HCT116 (cell line): ENCODE measurements at regions of chr10 and their contacts with region 1.

Region 1: GRCh38 chr10:6202684-6203330 is at the start of gene PFKFB3:
- DNase-seq: peak; percentile 71
- ATAC-seq: peak; percentile 89
- H3K4me3 ChIP-seq: peak within 1 kb of the TSS; percentile 58 to 74
- H3K27ac ChIP-seq: peak within 1 kb of the TSS; percentile 94
- H3K4me1 ChIP-seq: peaks cover 0 to 27% of the 10 kb centered on the region in 2 experiments; a peak in 3 of 4 replicates
- H3K27me3 ChIP-seq: no peaks in the 10 kb centered on the region
- CTCF ChIP-seq: peak; percentile 76 to 91 (median 83)
- POLR2A ChIP-seq: peak; percentile 88
- RAD21 ChIP-seq: peak; percentile 95
- total RNA-seq, gene PFKFB3: 50.8 TPM

Region 2: DNA sequence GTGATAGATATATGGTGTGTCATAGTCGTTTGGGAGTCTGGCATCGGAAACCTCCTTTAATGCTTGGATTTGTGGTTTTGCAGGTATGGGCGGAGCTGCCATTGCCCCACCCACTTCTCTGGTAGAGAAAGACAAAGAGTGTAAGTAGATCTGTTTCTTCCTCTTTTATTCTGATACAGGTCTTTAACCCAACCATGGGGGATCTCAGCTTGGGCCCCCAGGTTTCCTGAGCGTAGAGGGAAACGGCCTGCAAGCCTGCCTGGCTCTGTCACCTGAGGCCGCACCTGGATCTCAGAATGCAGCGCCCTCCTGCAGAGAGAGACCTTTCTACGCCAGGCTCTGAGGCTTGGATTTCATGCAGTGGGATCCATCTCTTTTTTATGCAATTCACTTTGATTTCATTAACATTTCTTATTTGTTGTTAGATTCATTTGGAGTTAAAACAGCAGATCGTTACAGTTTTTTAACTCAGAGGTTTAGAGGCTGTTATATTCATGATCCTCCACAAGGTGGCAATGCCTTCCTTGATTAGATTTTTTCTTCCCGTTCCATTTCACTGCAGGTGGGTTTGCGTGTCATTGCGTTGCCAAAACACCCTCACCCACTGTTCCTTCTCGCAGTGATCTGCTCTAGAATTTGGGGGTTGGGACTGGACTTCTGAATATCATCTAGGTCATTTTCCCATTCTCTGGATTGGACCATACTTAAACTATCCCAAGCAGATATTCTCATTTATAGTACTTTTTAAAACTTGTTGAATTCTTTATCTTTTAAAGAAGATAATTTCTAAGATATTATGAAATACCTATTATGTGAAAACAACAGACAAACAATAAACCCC is 94.0 kb before region 1 on chr10:
- CTCF ChIA-PET with region 1: no interaction called
- POLR2A ChIA-PET with region 1: no interaction called
- RAD21 ChIA-PET with region 1: no interaction called
- intact Hi-C with region 1: loop called (anchors 5 kb)
- DNase-seq: peak; percentile 13
- ATAC-seq: peak; percentile 72
- H3K4me3 ChIP-seq: no peak overlapping the region
- H3K27ac ChIP-seq: no peak overlapping the region
- H3K4me1 ChIP-seq: peaks cover 7 to 9% of the 10 kb centered on the region in 2 experiments; a peak in 3 of 4 replicates
- H3K27me3 ChIP-seq: no peaks in the 10 kb centered on the region
- CTCF ChIP-seq: peak; percentile 53 to 70 (median 67)
- POLR2A ChIP-seq: no peak
- RAD21 ChIP-seq: peak; percentile 69

Region 3: GRCh38 chr10:6163364-6164270 is 39.2 kb before region 1 on chr10:
- CTCF ChIA-PET with region 1: interaction called, 10 read pairs
- POLR2A ChIA-PET with region 1: interaction called, 4 read pairs
- RAD21 ChIA-PET with region 1: interaction called in 1 of 2 experiments, 3 read pairs
- intact Hi-C with region 1: no loop called
- DNase-seq: peak; percentile 69
- ATAC-seq: peak; percentile 95
- H3K4me3 ChIP-seq: peak overlapping the region; percentile 65 to 94
- H3K27ac ChIP-seq: peak overlapping the region; percentile 96
- H3K4me1 ChIP-seq: peaks cover 15 to 30% of the 10 kb centered on the region in 2 experiments; a peak in 3 of 4 replicates
- H3K27me3 ChIP-seq: no peaks in the 10 kb centered on the region
- CTCF ChIP-seq: no peak
- POLR2A ChIP-seq: no peak
- RAD21 ChIP-seq: no peak

Region 4: GRCh38 chr10:6239213-6239991 is 36.6 kb after region 1 on chr10:
- CTCF ChIA-PET with region 1: interaction called, 3 read pairs
- POLR2A ChIA-PET with region 1: interaction called, 3 read pairs
- RAD21 ChIA-PET with region 1: no interaction called
- intact Hi-C with region 1: loop called (anchors 2 kb)
- DNase-seq: peak; percentile 91
- ATAC-seq: peak; percentile 99
- H3K4me3 ChIP-seq: peak overlapping the region in 1 of 2 experiments; percentile 42; a peak in 2 of 4 replicates
- H3K27ac ChIP-seq: peak overlapping the region; percentile 60
- H3K4me1 ChIP-seq: peaks cover 7 to 16% of the 10 kb centered on the region in 2 experiments
- H3K27me3 ChIP-seq: no peaks in the 10 kb centered on the region
- CTCF ChIP-seq: no peak
- POLR2A ChIP-seq: no peak
- RAD21 ChIP-seq: peak; percentile 36; the same call in 1 of the 2 replicates

Region 5: DNA sequence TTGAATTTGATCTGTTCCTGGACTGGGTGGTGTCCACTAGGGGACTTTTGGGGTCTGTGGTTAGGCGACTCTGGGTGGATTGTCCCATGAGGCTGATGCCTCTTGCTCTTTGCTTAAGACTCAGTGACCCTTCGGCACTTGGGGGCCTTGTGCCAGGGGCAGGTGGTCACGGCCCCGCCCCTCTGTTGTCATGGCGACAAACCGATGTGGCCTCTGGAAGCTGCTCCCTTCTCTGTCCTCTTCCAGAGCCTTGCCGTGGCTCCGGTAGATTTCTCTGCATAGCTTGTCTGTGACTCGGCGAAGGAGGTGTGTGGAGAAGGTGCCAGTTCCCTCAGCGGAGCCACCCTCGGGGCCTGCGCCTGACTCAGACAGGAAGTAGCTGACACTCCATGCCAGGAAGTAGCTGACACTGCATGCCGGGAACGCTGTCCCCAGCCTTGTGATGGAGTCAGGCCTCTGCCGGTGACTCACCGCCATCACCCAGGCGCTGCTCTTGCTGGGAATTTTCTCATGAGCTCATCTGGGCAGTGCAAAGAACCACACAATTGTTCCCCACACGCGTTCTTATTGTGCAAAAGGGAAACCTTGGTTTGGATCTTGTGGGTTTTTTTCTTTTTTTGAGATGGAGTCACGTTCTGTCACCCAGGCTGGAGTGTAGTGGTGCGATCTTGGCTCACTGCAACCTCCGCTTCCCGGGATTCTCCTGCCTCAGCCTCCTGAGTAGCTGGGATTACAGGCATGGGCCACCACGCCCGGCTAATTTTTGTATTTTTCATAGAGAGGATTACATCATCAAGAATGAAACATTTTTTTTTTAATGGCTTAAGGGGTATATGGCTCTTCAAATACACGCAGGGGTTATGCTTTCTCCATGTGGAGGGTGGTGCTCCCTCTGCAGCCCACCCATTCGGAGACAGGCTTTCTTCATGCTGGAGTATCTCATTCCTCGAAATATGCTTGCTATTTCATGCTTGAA is 72.5 kb after region 1 on chr10:
- CTCF ChIA-PET with region 1: interaction called, 6 read pairs
- POLR2A ChIA-PET with region 1: interaction called, 6 read pairs
- RAD21 ChIA-PET with region 1: no interaction called
- intact Hi-C with region 1: loop called (anchors 1 kb)
- DNase-seq: peak; percentile 89
- ATAC-seq: peak; percentile 94
- H3K4me3 ChIP-seq: peak overlapping the region; percentile 45 to 53
- H3K27ac ChIP-seq: peak overlapping the region; percentile 61
- H3K4me1 ChIP-seq: peaks cover 28 to 39% of the 10 kb centered on the region in 2 experiments
- H3K27me3 ChIP-seq: no peaks in the 10 kb centered on the region
- CTCF ChIP-seq: peak in 1 of 3 experiments; percentile 29; a peak in 1 of 6 replicates
- POLR2A ChIP-seq: peak; percentile 87
- RAD21 ChIP-seq: no peak

Region 6: DNA sequence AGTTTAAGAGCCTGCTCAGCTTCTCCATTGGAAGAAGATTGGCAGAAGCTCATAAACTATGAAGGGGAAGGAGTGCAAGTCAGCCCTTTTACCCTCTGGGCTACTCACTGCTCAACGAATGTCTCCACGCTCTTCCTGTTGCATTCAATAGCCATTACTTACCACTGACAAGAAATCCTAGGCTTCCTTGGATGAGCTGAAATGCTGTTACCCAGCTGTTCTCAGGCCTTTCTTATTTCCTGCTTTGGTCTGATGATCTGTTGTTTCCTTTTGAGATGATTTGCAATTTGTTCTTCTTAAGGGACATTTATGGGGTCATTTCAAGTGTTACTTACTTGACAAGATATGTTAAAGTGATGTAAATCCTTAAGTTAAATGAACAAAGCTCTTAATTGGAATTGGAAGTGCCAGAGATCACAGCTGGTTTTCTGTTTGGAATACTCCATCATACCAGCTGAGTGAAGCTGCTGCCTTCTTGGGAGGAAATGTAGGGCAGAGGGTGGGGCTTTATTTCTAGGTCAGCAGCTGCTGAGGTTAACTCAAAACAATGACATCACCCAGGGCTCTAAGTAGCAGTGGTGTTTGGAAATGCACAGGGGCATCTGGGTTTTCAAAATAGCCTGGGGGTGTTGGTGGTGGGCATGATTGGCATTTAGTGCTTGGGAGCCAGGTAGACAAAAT is 207.3 kb after region 1 on chr10:
- CTCF ChIA-PET with region 1: interaction called, 17 read pairs
- POLR2A ChIA-PET with region 1: interaction called, 4 read pairs
- RAD21 ChIA-PET with region 1: no interaction called
- intact Hi-C with region 1: no loop called
- DNase-seq: no peak
- ATAC-seq: no peak
- H3K4me3 ChIP-seq: no peak overlapping the region
- H3K27ac ChIP-seq: no peak overlapping the region
- H3K4me1 ChIP-seq: peaks cover 0 to 3% of the 10 kb centered on the region in 2 experiments; a peak in 1 of 4 replicates
- H3K27me3 ChIP-seq: peaks cover 7% of the 10 kb centered on the region
- CTCF ChIP-seq: no peak
- POLR2A ChIP-seq: no peak
- RAD21 ChIP-seq: no peak

Region 7: DNA sequence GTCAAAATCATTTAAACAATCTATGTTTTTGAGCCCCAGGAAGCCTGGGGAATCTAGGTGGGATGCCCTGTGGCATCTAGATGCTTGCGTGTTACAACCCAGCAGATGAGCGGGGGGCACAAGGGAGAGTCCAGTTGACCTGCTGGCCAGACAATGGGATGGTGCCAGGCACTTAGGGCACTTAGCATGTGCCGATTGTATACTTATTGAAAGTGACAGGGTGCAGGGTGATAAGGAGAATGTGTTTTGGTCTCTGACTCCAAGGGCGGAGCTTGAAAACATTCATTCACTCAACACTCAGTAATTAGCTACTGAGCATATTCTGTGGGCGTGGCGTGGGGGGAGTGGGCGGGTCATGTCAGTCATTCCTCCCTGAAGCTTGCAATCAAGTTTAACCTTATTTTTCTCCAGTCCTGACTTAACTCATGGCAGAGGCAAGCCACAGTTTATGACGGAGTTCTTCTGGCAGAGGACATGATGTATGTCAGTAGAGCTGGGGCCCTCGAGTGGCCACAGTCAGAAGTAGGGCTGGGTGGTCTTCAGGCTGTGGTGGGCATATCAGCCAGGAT is 262.1 kb after region 1 on chr10:
- CTCF ChIA-PET with region 1: no interaction called
- POLR2A ChIA-PET with region 1: no interaction called
- RAD21 ChIA-PET with region 1: no interaction called
- intact Hi-C with region 1: no loop called
- DNase-seq: no peak
- ATAC-seq: no peak
- H3K4me3 ChIP-seq: no peak overlapping the region
- H3K27ac ChIP-seq: no peak overlapping the region
- H3K4me1 ChIP-seq: no peaks in the 10 kb centered on the region
- H3K27me3 ChIP-seq: peaks cover 34% of the 10 kb centered on the region
- CTCF ChIP-seq: no peak
- POLR2A ChIP-seq: no peak
- RAD21 ChIP-seq: no peak